ENCODE measurements at regions of chr11 and their contacts with region 1.

Region 1: GRCh38 chr11:33362051-33362910 is 105.1 kb downstream of the HIPK3 start:
- DNase-seq: peak in 1 of 10 donors; percentile 29

Region 2: DNA sequence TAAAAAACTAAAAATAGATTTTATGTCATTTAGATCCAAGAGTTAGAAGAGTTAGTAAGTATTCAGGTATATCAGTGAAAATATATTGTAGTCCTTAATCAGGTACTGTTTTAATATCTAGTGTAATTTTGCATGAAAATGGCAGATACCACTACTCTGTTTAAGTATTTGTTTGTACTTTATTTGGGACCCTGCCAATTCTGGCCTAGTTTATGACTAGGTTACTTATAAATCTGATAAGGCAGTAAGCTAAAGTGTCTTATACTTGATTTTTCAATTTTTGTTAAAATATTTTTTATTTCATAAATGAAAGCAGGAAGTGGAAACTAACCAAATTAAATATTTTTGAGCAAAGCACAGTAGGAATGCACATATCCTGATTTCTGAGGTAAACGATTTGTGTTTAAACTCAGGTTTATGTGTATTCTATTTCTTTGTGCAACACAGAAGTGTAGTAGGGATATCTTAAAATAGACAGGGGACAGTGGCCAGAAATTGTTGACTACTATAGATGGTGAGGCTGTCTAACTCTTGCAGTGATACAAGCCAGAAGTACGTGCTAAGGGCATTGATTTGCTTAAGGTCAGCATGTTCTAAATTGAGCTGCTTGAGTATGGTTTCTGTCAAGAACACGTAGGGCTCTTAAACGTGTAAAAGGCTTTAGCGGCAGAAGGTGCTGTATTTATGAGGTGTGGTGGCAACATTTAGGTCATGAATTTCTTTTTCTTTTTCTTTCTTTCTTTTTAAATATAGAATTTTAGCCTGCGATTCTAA is 71.1 kb before region 1 on chr11:
- intact Hi-C with region 1: no loop called
- DNase-seq: no peak

Region 3: GRCh38 chr11:33344611-33345010 is 17.7 kb before region 1 on chr11:
- intact Hi-C with region 1: no loop called
- DNase-seq: no peak

Region 4: GRCh38 chr11:33742249-33742851 is 380.1 kb after region 1 on chr11:
- intact Hi-C with region 1: loop called (anchors 5 kb)
- DNase-seq: peak in 1 of 10 donors; percentile 29